Activated B cell treated with CpG ODN at 0.5 μM for 24 hours (primary cell): ENCODE measurements at regions of chr3 and their contacts with region 1.

Region 1: GRCh38 chr3:150737874-150738713 is 24.9 kb downstream of the SIAH2 start:
- DNase-seq: no peak
- ATAC-seq: peak; percentile 11
- H3K4me3 Mint-ChIP-seq: peak overlapping the region; percentile 36
- H3K27ac Mint-ChIP-seq: peak overlapping the region; percentile 83
- H3K4me1 Mint-ChIP-seq: peaks cover 65% of the 10 kb centered on the region
- H3K27me3 Mint-ChIP-seq: no peaks in the 10 kb centered on the region
- CTCF ChIP-seq: no peak

Region 2: DNA sequence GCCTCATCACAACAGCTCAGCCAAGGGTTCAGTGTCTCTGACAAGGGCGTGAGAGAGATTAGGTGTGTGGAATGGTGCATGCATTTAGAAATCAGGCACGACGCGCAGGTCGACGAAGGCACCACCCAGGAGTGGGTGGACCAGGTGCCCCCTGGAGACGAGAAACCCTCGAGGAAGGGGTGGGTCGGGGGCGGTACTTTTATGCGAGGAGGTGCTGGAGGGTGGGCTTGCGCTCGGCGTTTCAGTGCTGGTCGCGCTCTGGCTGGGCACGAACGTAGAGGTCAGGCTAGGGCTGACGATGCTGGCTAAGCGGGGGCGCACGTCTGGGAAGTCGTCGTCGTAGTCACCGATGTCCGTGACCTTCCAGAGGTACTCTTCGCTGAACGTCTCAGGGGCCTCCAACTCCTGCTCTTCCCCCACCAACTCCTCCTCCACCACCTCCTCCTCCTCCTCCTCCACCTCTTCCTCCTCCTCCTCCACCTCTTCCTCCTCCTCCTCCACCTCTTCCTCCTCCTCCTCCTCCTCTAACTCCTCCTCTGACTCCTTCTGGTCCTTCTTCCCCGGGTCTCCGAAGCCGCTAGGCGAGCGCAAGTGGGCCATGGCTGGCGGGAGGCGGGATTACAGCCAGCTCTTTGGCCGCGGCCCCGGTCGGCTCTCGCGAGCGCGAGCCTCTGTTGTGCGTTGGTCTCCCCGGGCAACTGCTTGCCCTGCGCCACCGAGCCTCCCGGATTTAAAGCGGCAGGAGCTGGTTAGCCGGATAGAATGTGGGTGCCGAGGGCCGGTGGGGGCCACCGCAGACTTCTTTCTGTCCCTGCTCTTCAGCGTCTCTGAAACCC is 34.6 kb before region 1 on chr3 and contains the start of gene ERICH6:
- CTCF ChIA-PET with region 1: interaction called, 3 read pairs
- POLR2A ChIA-PET with region 1: interaction called, 11 read pairs
- intact Hi-C with region 1: loop called (anchors 1 kb)
- DNase-seq: peak; percentile 86
- ATAC-seq: peak; percentile 93
- H3K4me3 Mint-ChIP-seq: peak within 1 kb of the TSS; percentile 97
- H3K27ac Mint-ChIP-seq: peak within 1 kb of the TSS; percentile 98
- H3K4me1 Mint-ChIP-seq: peaks cover 19% of the 10 kb centered on the region
- H3K27me3 Mint-ChIP-seq: no peaks in the 10 kb centered on the region
- CTCF ChIP-seq: no peak
- total RNA-seq, gene ERICH6: not detected in 2 replicates

Region 3: DNA sequence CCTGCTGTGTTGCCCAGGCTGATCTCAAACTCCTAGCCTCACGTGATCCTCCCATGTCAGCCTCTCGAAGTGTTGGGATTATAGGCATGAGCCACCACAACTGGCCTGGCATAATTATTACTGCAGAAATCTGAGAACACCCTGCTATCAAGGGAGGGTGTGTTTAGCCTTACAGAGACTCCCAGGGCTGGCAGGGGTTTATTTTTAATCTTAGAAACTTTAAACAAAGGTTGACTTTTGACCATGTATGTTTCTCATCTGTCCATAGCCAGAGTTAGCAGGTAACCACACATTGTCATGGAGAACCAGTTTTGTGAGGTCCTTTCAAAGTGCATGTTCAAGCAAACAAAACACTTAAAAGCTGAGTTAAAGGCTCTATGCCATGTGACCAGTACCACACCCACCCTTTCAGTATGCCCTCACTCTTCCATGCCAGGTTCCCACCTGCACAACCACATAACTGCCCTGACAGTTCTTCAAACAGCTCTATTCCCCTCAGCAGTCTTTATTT is 13.7 kb after region 1 on chr3:
- CTCF ChIA-PET with region 1: no interaction called
- POLR2A ChIA-PET with region 1: no interaction called
- intact Hi-C with region 1: loop called (anchors 1 kb)
- DNase-seq: no peak
- ATAC-seq: no peak
- H3K4me3 Mint-ChIP-seq: no peak overlapping the region
- H3K27ac Mint-ChIP-seq: peak overlapping the region; percentile 18
- H3K4me1 Mint-ChIP-seq: peaks cover 84% of the 10 kb centered on the region
- H3K27me3 Mint-ChIP-seq: no peaks in the 10 kb centered on the region
- CTCF ChIP-seq: no peak